ENCODE measurements at regions of chr6 and their contacts with region 1.

Region 1: DNA sequence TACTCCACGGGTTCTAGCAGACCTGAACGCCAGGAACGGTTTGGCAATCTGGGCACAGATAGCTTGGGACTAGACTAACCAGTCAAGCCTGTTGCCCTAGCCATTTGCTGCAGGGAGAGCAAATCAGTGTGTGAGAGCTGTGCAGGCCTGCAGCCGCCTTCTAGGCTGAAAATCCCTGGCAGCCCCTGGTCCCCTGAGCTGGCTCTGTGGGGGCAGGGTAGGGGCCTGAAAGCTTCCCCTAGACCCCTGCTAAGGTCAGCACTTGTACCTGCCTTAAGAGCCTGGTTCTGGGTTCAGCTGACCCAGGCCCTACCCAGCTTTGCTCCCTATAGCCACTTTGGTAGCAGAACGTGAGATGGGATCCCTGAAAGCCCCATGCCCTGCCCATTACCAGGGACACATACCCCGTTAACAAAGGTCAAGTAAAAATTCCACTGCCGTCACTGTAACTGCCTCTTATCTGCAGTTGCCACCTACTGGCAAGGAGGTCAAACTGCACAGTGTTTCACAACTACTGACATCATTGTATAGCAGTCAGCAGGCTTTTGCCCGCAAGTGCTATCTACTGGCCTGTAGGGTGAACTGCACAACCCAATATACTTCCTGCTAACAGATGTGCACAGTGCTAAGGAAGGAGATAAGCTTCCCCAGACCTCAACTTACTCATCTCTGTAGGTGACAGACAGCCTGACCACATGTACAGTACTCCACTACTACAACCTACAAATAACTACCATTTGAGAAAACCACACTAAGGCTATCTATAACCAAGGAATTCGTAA is 95.1 kb upstream of the OLIG3 start:
- DNase-seq: peak; percentile 66 to 85 (median 77)
- H3K4me3 ChIP-seq: no peak overlapping the region
- H3K4me3 Mint-ChIP-seq: peak overlapping the region in 3 of 8 donors; percentile 15 to 69 (median 27)
- H3K27ac ChIP-seq: no peak overlapping the region
- H3K27ac Mint-ChIP-seq: peak overlapping the region in 4 of 7 donors; percentile 5 to 30 (median 14)
- H3K4me1 ChIP-seq: peaks cover 14% of the 10 kb centered on the region
- H3K4me1 Mint-ChIP-seq: peaks cover 9 to 19% (median 14%) of the 10 kb centered on the region in 4 donors
- H3K27me3 ChIP-seq: peaks cover 4% of the 10 kb centered on the region
- H3K27me3 Mint-ChIP-seq: peaks cover 9% of the 10 kb centered on the region in 2 donors

Region 2: DNA sequence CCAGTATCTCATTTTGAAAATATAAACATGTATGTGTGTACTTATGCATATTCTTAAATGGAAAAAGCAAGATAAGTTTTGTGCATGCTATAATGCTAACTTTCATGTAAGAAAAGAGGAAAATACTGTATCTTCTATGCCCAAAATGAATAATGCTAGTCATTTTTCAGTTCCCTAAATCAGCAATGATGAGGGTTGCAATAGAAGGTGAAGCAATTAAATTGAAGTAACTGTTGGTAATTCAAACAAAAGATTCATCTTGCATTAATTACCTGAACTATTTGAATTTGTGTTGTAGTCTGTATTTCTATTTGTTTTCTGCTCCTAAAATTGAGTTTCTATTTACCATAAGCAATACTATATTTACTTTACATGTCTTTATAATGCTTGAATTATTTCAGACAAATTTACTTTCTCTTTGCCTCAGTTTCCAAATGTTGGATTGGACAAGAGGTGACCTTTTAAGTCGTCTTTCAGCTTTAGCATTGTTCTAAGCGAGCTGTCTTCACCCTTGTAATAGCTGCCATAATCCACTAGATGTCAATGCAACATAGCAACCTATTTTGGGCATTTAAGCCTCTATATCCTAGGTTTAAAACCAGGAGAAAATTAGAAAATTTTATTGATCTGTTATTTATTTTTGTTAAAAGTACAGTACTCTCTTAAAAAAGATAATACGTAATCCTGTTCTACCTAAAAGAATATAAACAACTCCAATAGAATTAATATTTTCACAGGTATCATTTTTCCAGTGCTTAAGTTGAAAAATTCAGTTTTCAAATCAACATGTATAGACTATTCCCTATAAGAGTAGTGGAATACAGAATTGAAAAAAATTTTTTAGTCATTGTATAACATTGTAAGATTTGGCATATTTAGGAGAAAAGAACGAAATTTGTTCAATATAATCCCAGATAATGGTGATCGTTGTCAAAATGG is 317.7 kb before region 1 on chr6:
- CTCF ChIA-PET with region 1: interaction called, 4 read pairs
- POLR2A ChIA-PET with region 1: no interaction called
- intact Hi-C with region 1: loop called (anchors 1 kb)
- DNase-seq: peak in 4 of 5 donors; percentile 26 to 36 (median 33)
- H3K4me3 ChIP-seq: no peak overlapping the region
- H3K4me3 Mint-ChIP-seq: no peak overlapping the region
- H3K27ac ChIP-seq: no peak overlapping the region
- H3K27ac Mint-ChIP-seq: no peak overlapping the region
- H3K4me1 ChIP-seq: peaks cover 6% of the 10 kb centered on the region
- H3K4me1 Mint-ChIP-seq: peaks cover 2 to 19% (median 12%) of the 10 kb centered on the region in 4 donors
- H3K27me3 ChIP-seq: no peaks in the 10 kb centered on the region
- H3K27me3 Mint-ChIP-seq: no peaks in the 10 kb centered on the region

Region 3: DNA sequence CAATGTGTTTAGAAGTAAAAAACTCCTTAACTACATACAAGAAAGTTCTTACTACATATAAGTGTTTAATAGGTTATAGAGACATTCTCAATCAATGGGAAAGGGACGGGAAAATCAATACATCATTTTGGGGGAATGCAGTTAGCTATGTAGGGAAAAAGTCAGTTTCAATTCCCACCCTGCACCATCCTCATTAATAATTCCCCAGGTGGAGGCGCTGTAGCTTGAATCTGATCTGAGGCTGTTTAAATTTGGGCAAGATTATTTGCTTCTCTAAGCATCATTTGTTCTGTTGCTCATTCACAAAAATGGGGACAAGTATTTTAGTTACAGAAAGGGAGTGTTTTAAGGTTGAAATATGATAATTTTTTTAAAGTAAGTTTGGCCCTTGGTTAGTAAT is 114.2 kb before region 1 on chr6:
- CTCF ChIA-PET with region 1: interaction called, 13 read pairs
- POLR2A ChIA-PET with region 1: interaction called, 3 read pairs
- intact Hi-C with region 1: loop called (anchors 1 kb)
- DNase-seq: no peak
- H3K4me3 ChIP-seq: no peak overlapping the region
- H3K4me3 Mint-ChIP-seq: no peak overlapping the region
- H3K27ac ChIP-seq: no peak overlapping the region
- H3K27ac Mint-ChIP-seq: no peak overlapping the region
- H3K4me1 ChIP-seq: no peaks in the 10 kb centered on the region
- H3K4me1 Mint-ChIP-seq: no peaks in the 10 kb centered on the region
- H3K27me3 ChIP-seq: peaks cover 3% of the 10 kb centered on the region
- H3K27me3 Mint-ChIP-seq: peaks cover 9 to 17% of the 10 kb centered on the region in 2 donors

Region 4: DNA sequence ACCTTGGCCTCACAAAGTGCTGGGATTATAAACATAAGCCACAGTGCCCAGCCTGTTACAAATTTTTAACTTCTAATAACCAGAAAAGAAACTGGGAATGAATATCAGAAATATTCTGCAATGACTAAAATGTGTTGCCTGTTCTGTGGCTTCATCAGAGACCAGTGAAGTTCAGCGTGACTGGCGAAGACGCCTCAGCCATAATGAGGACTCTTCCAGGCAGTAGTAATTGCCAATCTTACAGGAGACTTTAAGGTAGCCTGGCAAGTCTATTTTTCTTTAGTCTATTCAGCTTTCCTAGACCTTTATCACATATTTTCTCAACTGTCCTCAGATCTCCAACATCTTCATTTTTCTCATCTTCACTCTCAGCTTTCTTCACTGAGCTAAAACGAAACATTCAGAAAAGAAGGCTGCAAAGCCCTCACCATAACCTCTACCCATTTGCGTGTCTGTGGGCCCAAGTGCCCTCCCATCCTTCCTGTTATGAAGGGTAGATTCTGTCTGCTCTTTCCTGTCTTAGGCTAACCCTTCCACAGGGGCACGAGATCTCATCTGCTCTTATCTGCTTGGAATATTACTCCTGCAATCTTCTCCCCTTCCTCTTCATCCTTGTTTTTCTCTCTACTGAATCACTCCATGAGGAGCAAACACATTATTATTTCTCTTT is 53.0 kb before region 1 on chr6:
- CTCF ChIA-PET with region 1: interaction called, 8 read pairs
- POLR2A ChIA-PET with region 1: interaction called, 3 read pairs
- intact Hi-C with region 1: loop called (anchors 1 kb)
- DNase-seq: peak in 4 of 5 donors; percentile 14 to 63 (median 52)
- H3K4me3 ChIP-seq: no peak overlapping the region
- H3K4me3 Mint-ChIP-seq: no peak overlapping the region
- H3K27ac ChIP-seq: no peak overlapping the region
- H3K27ac Mint-ChIP-seq: no peak overlapping the region
- H3K4me1 ChIP-seq: peaks cover 30% of the 10 kb centered on the region
- H3K4me1 Mint-ChIP-seq: peaks cover 0 to 7% (median 0%) of the 10 kb centered on the region in 4 donors
- H3K27me3 ChIP-seq: no peaks in the 10 kb centered on the region
- H3K27me3 Mint-ChIP-seq: peaks cover 2 to 3% of the 10 kb centered on the region in 2 donors

Region 5: GRCh38 chr6:137571854-137572253 is 17.4 kb before region 1 on chr6:
- CTCF ChIA-PET with region 1: interaction called, 42 read pairs
- POLR2A ChIA-PET with region 1: no interaction called
- intact Hi-C with region 1: no loop called
- DNase-seq: peak; percentile 51 to 64 (median 56)
- H3K4me3 ChIP-seq: no peak overlapping the region
- H3K4me3 Mint-ChIP-seq: no peak overlapping the region
- H3K27ac ChIP-seq: no peak overlapping the region
- H3K27ac Mint-ChIP-seq: no peak overlapping the region
- H3K4me1 ChIP-seq: no peaks in the 10 kb centered on the region
- H3K4me1 Mint-ChIP-seq: peaks cover 0 to 13% (median 6%) of the 10 kb centered on the region in 4 donors
- H3K27me3 ChIP-seq: no peaks in the 10 kb centered on the region
- H3K27me3 Mint-ChIP-seq: peaks cover 3 to 12% of the 10 kb centered on the region in 2 donors

Region 6: GRCh38 chr6:137764464-137764863 is 175.2 kb after region 1 on chr6:
- CTCF ChIA-PET with region 1: no interaction called
- POLR2A ChIA-PET with region 1: no interaction called
- intact Hi-C with region 1: no loop called
- DNase-seq: no peak
- H3K4me3 ChIP-seq: no peak overlapping the region
- H3K4me3 Mint-ChIP-seq: no peak overlapping the region
- H3K27ac ChIP-seq: no peak overlapping the region
- H3K27ac Mint-ChIP-seq: peak overlapping the region in 1 of 7 donors; percentile 84
- H3K4me1 ChIP-seq: peaks cover 29% of the 10 kb centered on the region
- H3K4me1 Mint-ChIP-seq: peaks cover 13 to 44% (median 25%) of the 10 kb centered on the region in 4 donors
- H3K27me3 ChIP-seq: no peaks in the 10 kb centered on the region
- H3K27me3 Mint-ChIP-seq: no peaks in the 10 kb centered on the region

Region 7: GRCh38 chr6:138086573-138087196 is 497.4 kb after region 1 on chr6:
- CTCF ChIA-PET with region 1: no interaction called
- POLR2A ChIA-PET with region 1: no interaction called
- intact Hi-C with region 1: no loop called
- DNase-seq: no peak
- H3K4me3 ChIP-seq: no peak overlapping the region
- H3K4me3 Mint-ChIP-seq: no peak overlapping the region
- H3K27ac ChIP-seq: no peak overlapping the region
- H3K27ac Mint-ChIP-seq: no peak overlapping the region
- H3K4me1 ChIP-seq: no peaks in the 10 kb centered on the region
- H3K4me1 Mint-ChIP-seq: no peaks in the 10 kb centered on the region
- H3K27me3 ChIP-seq: no peaks in the 10 kb centered on the region
- H3K27me3 Mint-ChIP-seq: peaks cover 1 to 4% of the 10 kb centered on the region in 2 donors